PC-3 (cell line): ENCODE measurements at regions of chr5 and their contacts with region 1.

Region 1: DNA sequence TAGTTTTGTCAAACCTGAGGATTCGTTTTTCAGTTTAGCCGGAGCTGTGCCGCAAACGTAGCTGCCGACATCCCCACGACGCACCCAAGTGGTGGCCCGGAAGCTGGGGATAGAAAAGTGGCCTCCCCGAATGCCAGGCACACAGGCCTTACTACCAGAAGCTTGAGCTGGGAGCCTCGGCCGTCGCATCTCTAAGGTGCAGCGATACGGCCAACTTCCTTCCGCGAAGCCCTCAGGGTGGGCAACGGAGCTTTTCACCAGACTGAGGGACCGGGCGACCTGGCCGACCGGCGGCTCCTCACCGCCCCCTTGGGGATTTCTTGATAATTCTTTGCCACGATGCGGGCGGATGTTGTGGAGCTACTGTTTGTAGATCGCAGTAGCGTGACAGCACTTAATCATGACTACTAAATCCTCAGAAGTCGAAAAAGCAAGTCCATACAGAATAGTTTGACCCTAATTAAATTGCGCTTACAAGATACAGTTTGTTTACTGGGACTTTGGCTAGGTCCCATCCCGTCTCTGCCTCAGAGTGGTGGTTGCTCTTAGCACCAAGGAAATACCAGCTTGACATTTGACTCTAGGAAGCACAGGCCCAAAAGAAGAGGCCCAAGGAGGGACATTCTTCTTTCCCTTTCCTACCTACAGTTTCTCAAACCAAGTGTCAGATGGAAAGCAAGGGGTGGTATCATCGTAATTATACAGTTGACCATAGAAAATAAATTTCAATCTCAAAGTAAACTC is 613 bp upstream of the TMEM267 start:
- DNase-seq: peak; percentile 93
- ATAC-seq: peak; percentile 72
- H3K4me3 ChIP-seq: peak overlapping the region; percentile 78
- H3K27ac ChIP-seq: peak overlapping the region; percentile 69
- H3K4me1 ChIP-seq: peaks cover 15% of the 10 kb centered on the region
- H3K27me3 ChIP-seq: no peaks in the 10 kb centered on the region
- CTCF ChIP-seq: peak; percentile 95

Region 2: DNA sequence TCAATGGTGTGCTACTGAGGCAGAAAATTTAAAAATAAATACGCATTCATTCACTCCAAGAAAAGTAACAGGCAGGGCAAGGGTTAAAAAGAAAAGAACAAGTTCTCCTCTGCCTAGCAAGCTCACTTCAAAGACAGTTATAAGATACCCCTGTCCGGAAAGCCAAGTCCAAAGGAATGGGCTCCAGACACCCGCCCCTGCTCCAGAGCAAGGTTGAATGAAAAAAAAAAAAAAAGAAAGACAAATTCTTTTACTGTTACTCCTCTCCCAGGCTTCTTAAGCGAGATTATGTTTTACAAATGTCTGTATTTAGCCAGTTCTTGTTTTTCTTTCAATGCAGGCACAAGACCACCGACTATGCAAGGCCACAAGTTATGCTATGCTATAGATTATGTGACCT is 435.0 kb before region 1 on chr5:
- CTCF ChIA-PET with region 1: no interaction called
- POLR2A ChIA-PET with region 1: interaction called, 20 read pairs
- intact Hi-C with region 1: loop called (anchors 5 kb)
- DNase-seq: no peak
- ATAC-seq: no peak
- H3K4me3 ChIP-seq: no peak overlapping the region
- H3K27ac ChIP-seq: no peak overlapping the region
- H3K4me1 ChIP-seq: peaks cover 46% of the 10 kb centered on the region
- H3K27me3 ChIP-seq: no peaks in the 10 kb centered on the region
- CTCF ChIP-seq: no peak

Region 3: GRCh38 chr5:43191740-43192557 is 292.3 kb before region 1 on chr5 and contains the start of gene NIM1K:
- CTCF ChIA-PET with region 1: interaction called, 11 read pairs
- POLR2A ChIA-PET with region 1: no interaction called
- intact Hi-C with region 1: no loop called
- DNase-seq: peak; percentile 30
- ATAC-seq: peak; percentile 59
- H3K4me3 ChIP-seq: peak within 1 kb of the TSS; percentile 71
- H3K27ac ChIP-seq: peak within 1 kb of the TSS; percentile 48
- H3K4me1 ChIP-seq: peaks cover 16% of the 10 kb centered on the region
- H3K27me3 ChIP-seq: no peaks in the 10 kb centered on the region
- CTCF ChIP-seq: no peak
- total RNA-seq, gene NIM1K: 0.17 and 0.26 TPM in 2 replicates

Region 4: GRCh38 chr5:43281840-43282658 is 202.2 kb before region 1 on chr5:
- CTCF ChIA-PET with region 1: no interaction called
- POLR2A ChIA-PET with region 1: interaction called, 22 read pairs
- intact Hi-C with region 1: no loop called
- DNase-seq: peak; percentile 91
- ATAC-seq: peak; percentile 71
- H3K4me3 ChIP-seq: no peak overlapping the region
- H3K27ac ChIP-seq: peak overlapping the region; percentile 81
- H3K4me1 ChIP-seq: peaks cover 25% of the 10 kb centered on the region
- H3K27me3 ChIP-seq: no peaks in the 10 kb centered on the region
- CTCF ChIP-seq: 0 out of 2 replicates have a peak, but pooled peaks have one; percentile 13

Region 5: DNA sequence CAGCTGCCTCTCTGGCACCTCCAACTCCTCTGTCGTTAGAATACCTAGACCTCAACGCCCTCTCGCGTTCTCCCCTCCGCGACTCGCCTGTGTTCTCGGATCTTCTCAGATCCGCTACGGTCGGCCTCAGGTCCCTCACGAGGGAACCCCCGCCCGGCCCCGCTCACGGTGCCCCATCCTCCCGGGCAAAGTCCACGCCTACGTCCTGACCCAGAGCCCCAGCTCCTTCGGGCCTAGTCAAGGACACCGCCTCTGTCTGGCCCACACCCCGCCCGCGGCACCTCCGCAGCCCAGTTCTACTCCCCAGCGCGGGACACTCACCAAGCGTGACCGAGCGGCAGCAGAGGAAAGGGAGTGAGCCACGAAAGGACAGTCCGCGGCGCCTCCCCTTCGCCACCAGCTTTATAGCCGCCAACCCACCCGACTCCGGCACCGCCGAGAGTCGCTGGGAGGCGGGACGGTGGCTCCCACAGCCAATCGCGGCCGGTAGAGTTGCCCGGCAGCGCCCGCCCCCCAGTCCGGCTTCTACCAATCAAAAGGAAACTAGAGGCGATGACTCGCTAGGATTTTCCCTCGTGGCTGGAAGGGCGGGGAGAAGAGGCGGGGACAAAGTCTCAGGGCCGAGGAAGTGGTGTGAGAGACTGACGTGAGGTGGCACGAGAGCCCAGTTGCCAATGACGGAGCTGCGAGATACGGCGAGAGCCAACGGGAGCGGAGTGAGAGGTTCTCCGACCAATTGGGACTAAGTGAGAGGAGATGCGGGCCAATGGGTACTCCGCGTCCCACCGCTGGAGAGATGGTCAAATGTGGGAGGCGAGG is 171.0 kb before region 1 on chr5 and contains the start of gene HMGCS1:
- CTCF ChIA-PET with region 1: interaction called, 6 read pairs
- POLR2A ChIA-PET with region 1: interaction called, 13 read pairs
- intact Hi-C with region 1: no loop called
- DNase-seq: peak; percentile 99
- ATAC-seq: peak; percentile 90
- H3K4me3 ChIP-seq: peak within 1 kb of the TSS; percentile 93
- H3K27ac ChIP-seq: peak within 1 kb of the TSS; percentile 89
- H3K4me1 ChIP-seq: peaks cover 64% of the 10 kb centered on the region
- H3K27me3 ChIP-seq: no peaks in the 10 kb centered on the region
- CTCF ChIP-seq: 0 out of 2 replicates have a peak, but pooled peaks have one; percentile 28
- total RNA-seq, gene HMGCS1: 31.4 and 39.7 TPM in 2 replicates

Region 6: GRCh38 chr5:43422143-43422542 is 62.1 kb before region 1 on chr5:
- CTCF ChIA-PET with region 1: interaction called, 4 read pairs
- POLR2A ChIA-PET with region 1: interaction called, 10 read pairs
- intact Hi-C with region 1: no loop called
- DNase-seq: peak; percentile 77
- ATAC-seq: peak; percentile 73
- H3K4me3 ChIP-seq: no peak overlapping the region
- H3K27ac ChIP-seq: no peak overlapping the region; the same call in 1 of the 2 replicates
- H3K4me1 ChIP-seq: peaks cover 24% of the 10 kb centered on the region
- H3K27me3 ChIP-seq: no peaks in the 10 kb centered on the region
- CTCF ChIP-seq: no peak

Region 7: GRCh38 chr5:43432473-43433365 is 51.6 kb before region 1 on chr5:
- CTCF ChIA-PET with region 1: no interaction called
- POLR2A ChIA-PET with region 1: no interaction called
- intact Hi-C with region 1: no loop called
- DNase-seq: peak; percentile 98
- ATAC-seq: peak; percentile 63
- H3K4me3 ChIP-seq: no peak overlapping the region
- H3K27ac ChIP-seq: peak overlapping the region; percentile 64
- H3K4me1 ChIP-seq: peaks cover 30% of the 10 kb centered on the region
- H3K27me3 ChIP-seq: no peaks in the 10 kb centered on the region
- CTCF ChIP-seq: no peak

Region 8: DNA sequence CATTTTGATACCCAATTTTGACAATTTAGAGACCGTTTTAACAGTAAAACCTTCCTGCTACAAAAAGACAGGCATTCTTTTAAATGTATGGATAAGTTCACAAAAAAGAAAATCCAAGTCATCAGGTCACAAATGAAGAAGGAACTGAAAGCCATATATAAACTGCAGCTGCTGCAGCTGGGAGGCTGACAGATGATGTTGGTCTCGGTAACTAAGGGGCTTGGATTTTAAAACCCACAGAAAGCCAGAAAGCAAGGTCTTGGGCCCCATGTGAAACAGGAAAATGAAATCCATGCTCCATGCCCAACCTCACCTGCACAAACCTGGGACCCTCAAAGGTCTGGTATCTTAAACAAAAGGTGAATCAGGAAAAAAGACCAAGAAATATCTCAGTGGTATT is 46.4 kb after region 1 on chr5:
- CTCF ChIA-PET with region 1: no interaction called
- POLR2A ChIA-PET with region 1: no interaction called
- intact Hi-C with region 1: no loop called
- DNase-seq: no peak
- ATAC-seq: no peak
- H3K4me3 ChIP-seq: no peak overlapping the region
- H3K27ac ChIP-seq: no peak overlapping the region
- H3K4me1 ChIP-seq: no peaks in the 10 kb centered on the region
- H3K27me3 ChIP-seq: no peaks in the 10 kb centered on the region
- CTCF ChIP-seq: no peak

Region 9: GRCh38 chr5:43556857-43557542 is 72.7 kb after region 1 on chr5 and contains the start of gene PAIP1:
- CTCF ChIA-PET with region 1: no interaction called
- POLR2A ChIA-PET with region 1: no interaction called
- intact Hi-C with region 1: loop called (anchors 1 kb)
- DNase-seq: peak; percentile 89
- ATAC-seq: peak; percentile 78
- H3K4me3 ChIP-seq: peak within 1 kb of the TSS; percentile 82
- H3K27ac ChIP-seq: peak within 1 kb of the TSS; percentile 65
- H3K4me1 ChIP-seq: peaks cover 25% of the 10 kb centered on the region
- H3K27me3 ChIP-seq: no peaks in the 10 kb centered on the region
- CTCF ChIP-seq: peak; percentile 70
- total RNA-seq, gene PAIP1: 117 and 142 TPM in 2 replicates